ENCODE measurements at regions of chr3 and their contacts with region 1.

Region 1: DNA sequence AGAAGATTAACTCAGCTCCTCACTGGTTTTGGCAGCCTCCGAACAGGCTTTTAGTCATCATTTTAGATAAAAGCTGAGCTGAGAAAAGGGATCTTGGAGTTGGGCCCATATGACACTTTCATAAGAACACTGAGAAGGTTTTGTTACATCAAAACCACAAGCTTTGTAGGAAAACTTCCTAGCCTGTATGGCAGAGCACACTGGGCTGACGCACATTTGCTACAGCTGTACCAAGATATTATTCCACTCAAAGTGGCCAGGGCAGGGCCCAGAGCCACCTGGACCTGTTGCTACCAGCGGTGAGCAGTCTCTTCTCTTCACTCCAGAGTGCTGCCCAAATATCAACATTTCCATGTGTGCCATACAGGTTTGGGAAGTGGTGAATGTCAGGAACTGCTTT is 160.5 kb upstream of the CCDC54 start:
- DNase-seq: peak; percentile 30
- H3K4me3 Mint-ChIP-seq: no peak overlapping the region
- H3K27ac Mint-ChIP-seq: no peak overlapping the region
- H3K4me1 Mint-ChIP-seq: peaks cover 9% of the 10 kb centered on the region
- H3K27me3 Mint-ChIP-seq: no peaks in the 10 kb centered on the region
- CTCF ChIP-seq: no peak

Region 2: GRCh38 chr3:106097817-106098435 is 1118.8 kb before region 1 on chr3:
- CTCF ChIA-PET with region 1: no interaction called
- intact Hi-C with region 1: no loop called
- DNase-seq: no peak
- H3K4me3 Mint-ChIP-seq: no peak overlapping the region
- H3K27ac Mint-ChIP-seq: no peak overlapping the region
- H3K4me1 Mint-ChIP-seq: no peaks in the 10 kb centered on the region
- H3K27me3 Mint-ChIP-seq: no peaks in the 10 kb centered on the region
- CTCF ChIP-seq: no peak

Region 3: DNA sequence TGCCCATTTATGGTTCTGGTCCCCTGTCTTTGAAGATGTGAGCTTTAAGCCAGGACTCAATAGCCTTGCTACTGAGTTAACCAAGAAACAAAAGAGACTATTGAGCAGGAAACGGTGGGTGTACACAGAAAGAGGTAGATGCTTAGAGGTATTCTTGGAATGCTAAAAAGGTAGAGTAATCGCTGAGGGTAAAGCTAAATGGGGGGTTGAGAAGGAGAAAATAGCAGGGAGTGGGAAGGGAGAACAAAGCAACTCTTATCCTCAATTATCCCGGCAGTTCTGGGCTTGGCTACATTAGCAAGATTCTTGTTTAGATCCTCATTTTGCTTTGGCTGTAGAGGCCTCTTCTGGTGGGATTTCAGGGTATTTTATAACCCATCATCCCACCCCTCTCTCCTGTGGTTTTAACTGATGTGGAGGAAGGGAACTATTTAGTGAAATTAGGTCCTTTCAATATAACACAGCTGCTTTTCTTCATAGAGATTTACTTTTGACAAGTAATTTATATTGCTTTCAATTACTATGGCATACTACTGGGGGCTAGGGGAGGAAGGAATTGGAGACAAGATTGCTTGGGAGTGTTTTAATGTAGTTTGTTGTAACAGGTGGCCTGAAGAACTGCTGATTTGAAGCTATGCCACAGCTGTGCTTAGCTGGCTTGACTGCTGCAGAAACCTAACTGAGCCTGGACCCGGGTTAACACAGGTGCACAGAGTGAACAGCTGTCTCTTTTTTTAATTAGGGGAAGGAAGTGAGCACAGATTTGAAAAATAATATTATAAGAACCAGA is 73.7 kb before region 1 on chr3:
- CTCF ChIA-PET with region 1: no interaction called
- intact Hi-C with region 1: loop called (anchors 2 kb)
- DNase-seq: peak; percentile 4
- H3K4me3 Mint-ChIP-seq: no peak overlapping the region
- H3K27ac Mint-ChIP-seq: peak overlapping the region; percentile 69
- H3K4me1 Mint-ChIP-seq: peaks cover 14% of the 10 kb centered on the region
- H3K27me3 Mint-ChIP-seq: no peaks in the 10 kb centered on the region
- CTCF ChIP-seq: no peak